GM12878 (cell line): ENCODE measurements at regions of chr9 and their contacts with region 1.

Region 1: DNA sequence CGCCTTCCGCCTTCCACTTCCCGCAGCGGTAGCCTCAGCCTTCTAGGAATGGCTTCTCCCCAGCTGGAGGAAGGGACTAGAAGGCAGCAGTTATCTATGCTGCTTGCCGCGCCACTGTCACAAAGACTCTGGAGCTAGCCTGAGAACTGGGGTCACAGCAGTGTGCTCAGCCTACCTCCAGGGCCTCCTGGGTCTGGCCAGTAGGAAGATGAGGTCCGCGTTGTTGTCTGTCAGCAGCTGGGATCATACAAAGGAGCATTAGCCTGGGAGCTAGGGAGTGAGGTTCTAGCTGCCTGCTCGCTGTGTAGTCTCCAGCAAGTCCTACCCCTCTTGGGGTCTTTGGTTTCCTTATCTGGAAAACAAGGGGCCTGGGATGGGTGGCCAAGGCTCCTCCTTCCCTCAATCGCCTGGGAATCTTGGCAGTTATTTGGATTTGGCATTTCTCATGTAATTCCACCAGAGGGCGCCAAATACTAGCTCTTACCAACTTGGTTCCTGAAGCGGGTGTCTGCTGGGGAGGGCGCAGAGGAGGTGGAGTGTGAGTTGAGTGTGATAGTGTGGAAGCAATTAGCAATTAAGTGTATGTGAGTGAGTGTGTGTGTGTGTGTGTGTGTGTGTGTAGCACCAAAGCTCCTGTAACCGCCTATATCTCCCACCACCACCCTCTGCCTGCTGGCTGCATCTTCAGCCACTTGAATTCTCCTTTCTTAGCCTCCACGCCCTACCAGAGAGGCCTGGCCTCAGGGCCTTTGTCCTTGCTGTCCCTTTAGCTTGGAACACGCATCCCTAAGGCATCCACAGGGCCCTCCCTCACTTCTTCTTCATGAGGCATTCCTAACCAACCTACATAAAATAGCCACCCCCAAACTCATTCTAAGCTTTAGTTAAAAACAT is 97.1 kb downstream of the ENTREP1 start:
- DNase-seq: no peak
- ATAC-seq: peak; percentile 81
- H3K4me3 ChIP-seq: no peak overlapping the region
- H3K27ac ChIP-seq: no peak overlapping the region
- H3K4me1 ChIP-seq: no peaks in the 10 kb centered on the region
- H3K27me3 ChIP-seq: no peaks in the 10 kb centered on the region; a peak in 2 of 4 replicates
- CTCF ChIP-seq: peak; percentile 63 to 83 (median 70); a peak in 5 of 6 replicates
- EP300 ChIP-seq: no peak
- POLR2A ChIP-seq: no peak
- RAD21 ChIP-seq: peak; percentile 95

Region 2: DNA sequence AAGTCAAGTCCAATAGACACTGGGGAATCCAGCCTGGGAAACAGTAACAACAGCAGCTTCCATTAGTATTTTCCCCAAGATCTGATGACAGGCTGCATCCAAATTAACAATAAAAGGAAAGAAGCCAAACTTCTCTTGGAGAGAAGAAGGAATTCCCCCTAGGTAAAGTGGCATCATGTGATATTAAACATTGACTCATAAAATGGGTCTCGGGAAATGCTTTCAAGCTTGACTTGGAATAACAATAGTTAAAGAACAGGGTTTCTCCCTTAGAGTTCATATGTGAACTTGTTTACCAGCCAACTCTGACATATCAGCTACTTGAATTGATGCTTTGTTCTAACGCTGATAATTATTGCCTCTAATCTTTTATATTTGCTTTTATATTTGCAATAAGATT is 51.7 kb before region 1 on chr9:
- CTCF ChIA-PET with region 1: no interaction called
- POLR2A ChIA-PET with region 1: no interaction called
- RAD21 ChIA-PET with region 1: no interaction called
- SMC1A ChIA-PET with region 1: no interaction called
- in situ Hi-C with region 1: no loop called
- intact Hi-C with region 1: loop called (anchors 5 kb)
- DNase-seq: no peak
- ATAC-seq: no peak
- H3K4me3 ChIP-seq: no peak overlapping the region
- H3K27ac ChIP-seq: no peak overlapping the region
- H3K4me1 ChIP-seq: no peaks in the 10 kb centered on the region
- H3K27me3 ChIP-seq: no peaks in the 10 kb centered on the region
- CTCF ChIP-seq: no peak
- EP300 ChIP-seq: no peak
- POLR2A ChIP-seq: no peak
- RAD21 ChIP-seq: no peak

Region 3: GRCh38 chr9:69549310-69550202 is 127.4 kb after region 1 on chr9:
- CTCF ChIA-PET with region 1: interaction called, 89 read pairs
- POLR2A ChIA-PET with region 1: no interaction called
- RAD21 ChIA-PET with region 1: interaction called, 26 read pairs
- SMC1A ChIA-PET with region 1: interaction called, 48 read pairs
- in situ Hi-C with region 1: loop called (anchors 5 kb)
- intact Hi-C with region 1: loop called (anchors 1 kb)
- DNase-seq: no peak
- ATAC-seq: peak; percentile 67
- H3K4me3 ChIP-seq: no peak overlapping the region
- H3K27ac ChIP-seq: no peak overlapping the region
- H3K4me1 ChIP-seq: no peaks in the 10 kb centered on the region
- H3K27me3 ChIP-seq: peaks cover 2 to 3% of the 10 kb centered on the region in 2 experiments; a peak in 2 of 4 replicates
- CTCF ChIP-seq: peak; percentile 75 to 80 (median 78)
- EP300 ChIP-seq: no peak
- POLR2A ChIP-seq: no peak
- RAD21 ChIP-seq: peak; percentile 82

Region 4: DNA sequence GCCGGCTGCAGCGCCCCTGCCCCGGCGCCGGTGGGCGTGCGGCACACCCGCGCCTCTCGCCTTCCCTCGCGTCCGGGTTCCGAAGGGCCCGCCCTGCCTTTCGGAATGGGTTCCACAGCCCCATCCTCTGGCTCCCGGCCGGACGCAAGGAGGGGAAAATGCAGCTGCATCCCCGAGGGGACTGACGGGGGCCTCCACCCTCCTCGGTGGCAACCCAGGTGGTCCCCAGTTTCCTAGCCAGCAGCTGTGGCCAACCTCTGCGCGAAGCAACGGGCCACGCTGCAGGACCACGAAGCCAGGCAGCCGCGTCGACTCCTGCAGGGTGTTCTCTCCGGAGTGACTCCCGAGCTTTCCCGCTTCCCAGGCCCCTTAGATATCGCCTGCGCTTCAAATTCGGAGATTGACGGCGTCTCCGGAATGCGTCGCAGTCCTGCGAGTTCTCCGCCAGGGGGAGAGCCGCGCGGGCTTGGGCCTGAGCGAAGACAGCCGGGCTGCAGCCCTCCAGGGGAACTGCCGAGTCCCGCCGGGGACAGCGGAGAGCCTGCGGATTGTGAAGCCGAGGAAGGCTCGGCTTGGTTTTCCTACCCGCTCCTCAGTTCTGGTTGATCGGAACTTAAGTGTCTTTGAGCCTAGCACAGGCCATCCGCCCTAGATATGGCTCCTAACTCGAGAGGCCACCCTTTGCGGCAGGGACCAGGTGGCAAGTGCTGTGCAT is 250.6 kb after region 1 on chr9:
- CTCF ChIA-PET with region 1: no interaction called
- POLR2A ChIA-PET with region 1: no interaction called
- RAD21 ChIA-PET with region 1: no interaction called
- SMC1A ChIA-PET with region 1: no interaction called
- in situ Hi-C with region 1: no loop called
- intact Hi-C with region 1: loop called (anchors 5 kb)
- DNase-seq: peak; percentile 3
- ATAC-seq: peak; percentile 99
- H3K4me3 ChIP-seq: peak overlapping the region; percentile 47; the same call in 1 of the 2 replicates
- H3K27ac ChIP-seq: no peak overlapping the region
- H3K4me1 ChIP-seq: no peaks in the 10 kb centered on the region
- H3K27me3 ChIP-seq: peaks cover 4 to 6% of the 10 kb centered on the region in 2 experiments
- CTCF ChIP-seq: peak; percentile 75 to 84 (median 83)
- EP300 ChIP-seq: no peak
- POLR2A ChIP-seq: no peak
- RAD21 ChIP-seq: peak; percentile 62

Region 5: GRCh38 chr9:69877854-69878514 is 455.8 kb after region 1 on chr9:
- CTCF ChIA-PET with region 1: interaction called, 8 read pairs
- POLR2A ChIA-PET with region 1: no interaction called
- RAD21 ChIA-PET with region 1: no interaction called
- SMC1A ChIA-PET with region 1: interaction called, 3 read pairs
- in situ Hi-C with region 1: loop called (anchors 10 kb)
- intact Hi-C with region 1: loop called (anchors 2 kb)
- DNase-seq: no peak
- ATAC-seq: peak; percentile 57
- H3K4me3 ChIP-seq: no peak overlapping the region
- H3K27ac ChIP-seq: no peak overlapping the region
- H3K4me1 ChIP-seq: no peaks in the 10 kb centered on the region
- H3K27me3 ChIP-seq: no peaks in the 10 kb centered on the region
- CTCF ChIP-seq: peak; percentile 46 to 53 (median 53); a peak in 5 of 6 replicates
- EP300 ChIP-seq: no peak
- POLR2A ChIP-seq: no peak
- RAD21 ChIP-seq: peak; percentile 76

Region 6: DNA sequence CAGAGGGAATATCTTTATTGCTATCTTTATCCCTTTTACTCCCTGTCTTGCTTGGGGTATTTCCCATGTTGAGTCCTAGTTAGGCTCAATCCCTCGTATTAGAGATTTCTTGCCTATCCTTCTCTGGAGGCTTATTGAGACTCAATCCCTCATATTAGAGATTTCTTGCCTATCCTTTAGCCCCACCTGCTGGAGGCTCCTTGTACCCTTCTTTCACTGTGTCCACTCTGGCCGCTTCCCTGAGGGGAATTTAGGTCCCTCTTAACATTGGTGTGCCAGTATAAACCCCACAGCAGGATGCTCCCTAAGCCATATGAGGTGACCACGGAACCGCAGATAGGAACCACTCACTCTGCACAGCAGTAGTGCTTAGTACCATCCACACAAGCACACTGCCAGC is 510.7 kb after region 1 on chr9:
- CTCF ChIA-PET with region 1: interaction called, 10 read pairs
- POLR2A ChIA-PET with region 1: no interaction called
- RAD21 ChIA-PET with region 1: interaction called, 3 read pairs
- SMC1A ChIA-PET with region 1: no interaction called
- in situ Hi-C with region 1: loop called (anchors 10 kb)
- intact Hi-C with region 1: no loop called
- DNase-seq: no peak
- ATAC-seq: peak; percentile 64
- H3K4me3 ChIP-seq: no peak overlapping the region
- H3K27ac ChIP-seq: no peak overlapping the region
- H3K4me1 ChIP-seq: no peaks in the 10 kb centered on the region
- H3K27me3 ChIP-seq: no peaks in the 10 kb centered on the region
- CTCF ChIP-seq: peak; percentile 16 to 35 (median 28); a peak in 4 of 6 replicates
- EP300 ChIP-seq: no peak
- POLR2A ChIP-seq: no peak
- RAD21 ChIP-seq: peak; percentile 24; the same call in 1 of the 2 replicates